PC-9 (cell line): ENCODE measurements at regions of chr4 and their contacts with region 1.

Region 1: GRCh38 chr4:24584175-24584850 is at the start of gene DHX15:
- DNase-seq: peak; percentile 91 to 92
- H3K4me3 ChIP-seq: peak within 1 kb of the TSS; percentile 99
- H3K27ac ChIP-seq: peak within 1 kb of the TSS; percentile 96
- H3K4me1 ChIP-seq: peaks cover 14% of the 10 kb centered on the region
- H3K27me3 ChIP-seq: no peaks in the 10 kb centered on the region
- CTCF ChIP-seq: no peak
- total RNA-seq, gene DHX15: 134 and 157 TPM in 2 replicates

Region 2: GRCh38 chr4:24537025-24537424 is 47.3 kb before region 1 on chr4:
- CTCF ChIA-PET with region 1: interaction called, 13 read pairs
- POLR2A ChIA-PET with region 1: interaction called, 7 read pairs
- intact Hi-C with region 1: no loop called
- DNase-seq: no peak
- H3K4me3 ChIP-seq: no peak overlapping the region
- H3K27ac ChIP-seq: no peak overlapping the region
- H3K4me1 ChIP-seq: no peaks in the 10 kb centered on the region
- H3K27me3 ChIP-seq: no peaks in the 10 kb centered on the region
- CTCF ChIP-seq: no peak

Region 3: GRCh38 chr4:24642981-24643547 is 58.8 kb after region 1 on chr4:
- CTCF ChIA-PET with region 1: no interaction called
- POLR2A ChIA-PET with region 1: no interaction called
- intact Hi-C with region 1: loop called (anchors 5 kb)
- DNase-seq: peak; percentile 53 to 89
- H3K4me3 ChIP-seq: no peak overlapping the region; the same call in 1 of the 2 replicates
- H3K27ac ChIP-seq: peak overlapping the region; percentile 65
- H3K4me1 ChIP-seq: peaks cover 38% of the 10 kb centered on the region
- H3K27me3 ChIP-seq: no peaks in the 10 kb centered on the region
- CTCF ChIP-seq: no peak

Region 4: GRCh38 chr4:24686871-24687680 is 102.8 kb after region 1 on chr4:
- CTCF ChIA-PET with region 1: no interaction called
- POLR2A ChIA-PET with region 1: interaction called, 7 read pairs
- intact Hi-C with region 1: loop called (anchors 2 kb)
- DNase-seq: peak; percentile 44
- H3K4me3 ChIP-seq: no peak overlapping the region
- H3K27ac ChIP-seq: no peak overlapping the region
- H3K4me1 ChIP-seq: no peaks in the 10 kb centered on the region; the same call in 1 of the 2 replicates
- H3K27me3 ChIP-seq: no peaks in the 10 kb centered on the region
- CTCF ChIP-seq: peak; percentile 64

Region 5: DNA sequence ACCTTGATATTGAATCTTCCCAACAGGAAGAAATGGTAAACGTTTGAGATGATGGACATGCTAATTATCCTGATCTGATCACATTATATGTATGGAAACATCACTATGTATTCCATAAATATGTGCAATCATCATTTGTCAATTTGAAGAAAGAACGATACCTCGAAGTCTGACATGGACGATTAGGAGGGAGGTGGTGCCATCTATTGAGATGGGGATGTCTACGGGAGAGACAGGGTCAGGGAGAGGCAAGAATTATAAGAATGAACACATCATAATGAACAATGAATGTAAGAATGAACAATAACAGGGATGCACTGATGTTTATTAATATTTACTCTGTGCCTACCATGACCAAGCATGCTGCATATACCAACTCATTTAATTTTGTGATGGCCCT is 117.4 kb after region 1 on chr4:
- CTCF ChIA-PET with region 1: no interaction called
- POLR2A ChIA-PET with region 1: no interaction called
- intact Hi-C with region 1: no loop called
- DNase-seq: no peak
- H3K4me3 ChIP-seq: no peak overlapping the region
- H3K27ac ChIP-seq: no peak overlapping the region
- H3K4me1 ChIP-seq: no peaks in the 10 kb centered on the region
- H3K27me3 ChIP-seq: no peaks in the 10 kb centered on the region
- CTCF ChIP-seq: no peak

Region 6: DNA sequence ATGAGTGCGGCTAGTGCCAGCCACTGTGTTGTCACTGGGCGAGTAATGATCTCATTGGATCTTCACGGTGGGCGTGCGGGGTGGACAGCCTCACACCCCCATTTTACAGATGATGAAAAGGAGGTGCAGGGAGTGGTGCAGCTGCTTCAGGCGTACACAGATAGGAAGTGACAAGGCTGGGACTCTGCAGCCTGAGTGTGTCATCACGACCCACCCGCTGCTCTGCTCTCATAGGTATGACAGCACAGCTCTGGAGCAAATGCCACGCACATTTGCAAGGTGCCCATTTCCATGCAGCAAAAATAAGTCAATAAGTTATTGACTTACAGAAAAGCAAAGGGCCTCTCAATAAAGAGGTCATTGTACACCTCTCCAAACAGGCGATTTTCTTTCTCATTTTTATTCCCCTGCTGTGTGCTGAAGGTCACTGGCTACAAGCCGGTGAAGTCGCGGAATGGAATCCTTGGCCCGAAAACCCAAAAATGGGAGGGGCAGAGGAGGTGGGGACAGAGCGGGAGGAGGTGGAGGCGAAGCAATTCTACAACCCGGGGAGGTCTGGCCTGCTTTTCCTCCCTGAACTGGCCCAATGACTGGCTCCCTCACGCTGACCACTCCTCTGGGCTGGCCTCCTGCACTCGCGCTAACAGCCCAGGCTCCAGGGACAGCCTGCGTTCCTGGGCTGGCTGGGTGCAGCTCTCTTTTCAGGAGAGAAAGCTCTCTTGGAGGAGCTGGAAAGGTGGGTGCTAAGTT is 210.8 kb after region 1 on chr4 and contains the start of gene SOD3:
- CTCF ChIA-PET with region 1: no interaction called
- POLR2A ChIA-PET with region 1: no interaction called
- intact Hi-C with region 1: loop called (anchors 5 kb)
- DNase-seq: peak; percentile 78 to 86
- H3K4me3 ChIP-seq: peak within 1 kb of the TSS; percentile 34; the same call in 1 of the 2 replicates
- H3K27ac ChIP-seq: peak within 1 kb of the TSS; percentile 25; the same call in 1 of the 2 replicates
- H3K4me1 ChIP-seq: peaks cover 12% of the 10 kb centered on the region
- H3K27me3 ChIP-seq: no peaks in the 10 kb centered on the region
- CTCF ChIP-seq: no peak
- total RNA-seq, gene SOD3: 6.3 and 7.6 TPM in 2 replicates

Region 7: GRCh38 chr4:24912252-24913118 is 328.2 kb after region 1 on chr4 and contains the start of gene CCDC149:
- CTCF ChIA-PET with region 1: no interaction called
- POLR2A ChIA-PET with region 1: no interaction called
- intact Hi-C with region 1: loop called (anchors 5 kb)
- DNase-seq: peak; percentile 76 to 84
- H3K4me3 ChIP-seq: peak within 1 kb of the TSS; percentile 58
- H3K27ac ChIP-seq: peak within 1 kb of the TSS; percentile 40; the same call in 1 of the 2 replicates
- H3K4me1 ChIP-seq: peaks cover 13% of the 10 kb centered on the region
- H3K27me3 ChIP-seq: no peaks in the 10 kb centered on the region
- CTCF ChIP-seq: no peak
- total RNA-seq, gene CCDC149: 8.1 and 9.8 TPM in 2 replicates